ENCODE measurements at regions of chr3 and their contacts with region 1.

Region 1: DNA sequence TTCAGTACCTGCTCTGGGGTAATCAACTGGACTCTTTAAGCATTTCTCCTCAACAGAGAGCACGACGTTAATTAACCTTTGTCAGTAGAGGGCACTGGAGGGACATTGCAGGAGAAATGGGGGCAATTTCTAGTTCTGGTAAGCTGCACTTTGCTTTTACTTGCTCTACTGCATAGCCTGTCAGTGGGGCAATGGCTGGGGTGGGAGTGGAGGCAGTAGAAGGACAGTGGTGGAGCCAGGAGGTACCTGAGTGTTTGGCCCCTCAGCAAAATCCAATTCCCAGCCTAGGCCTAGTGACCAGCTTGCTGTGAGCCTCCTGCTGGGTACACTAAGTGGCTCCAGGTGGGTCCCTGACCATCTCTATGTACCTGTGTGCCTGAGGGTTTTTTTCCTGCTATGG is 18.3 kb upstream of the MED12L start:
- DNase-seq: peak; percentile 38
- ATAC-seq: no peak; the same call in 1 of the 2 replicates
- H3K4me3 ChIP-seq: no peak overlapping the region
- H3K27ac ChIP-seq: no peak overlapping the region
- H3K4me1 ChIP-seq: no peaks in the 10 kb centered on the region
- H3K27me3 ChIP-seq: peaks cover 9% of the 10 kb centered on the region; the same call in 1 of the 2 replicates
- CTCF ChIP-seq: peak; percentile 58

Region 2: DNA sequence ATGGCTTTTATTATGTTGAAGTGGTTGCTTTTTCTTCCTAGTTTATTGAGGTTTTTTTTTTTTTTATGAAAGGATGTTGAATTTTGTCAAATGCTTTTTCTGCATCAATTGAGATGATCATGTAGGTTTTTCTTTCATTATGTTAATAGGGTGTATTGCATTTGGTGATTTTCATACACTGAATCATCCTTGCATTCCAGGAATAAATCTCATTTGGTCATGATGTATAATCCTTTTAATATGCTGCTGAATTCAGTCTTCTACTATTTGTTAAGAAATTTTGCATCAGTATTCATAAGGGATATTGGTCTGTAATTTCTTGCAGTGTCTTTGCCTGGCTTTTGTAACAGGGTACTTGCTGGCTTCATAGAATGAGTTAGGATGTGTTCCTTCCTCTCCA is 83.1 kb before region 1 on chr3:
- CTCF ChIA-PET with region 1: no interaction called
- POLR2A ChIA-PET with region 1: no interaction called
- intact Hi-C with region 1: no loop called
- DNase-seq: no peak
- ATAC-seq: no peak
- H3K4me3 ChIP-seq: no peak overlapping the region
- H3K27ac ChIP-seq: no peak overlapping the region
- H3K4me1 ChIP-seq: no peaks in the 10 kb centered on the region
- H3K27me3 ChIP-seq: peaks cover 78% of the 10 kb centered on the region
- CTCF ChIP-seq: no peak

Region 3: GRCh38 chr3:151008699-151009098 is 58.5 kb before region 1 on chr3:
- CTCF ChIA-PET with region 1: no interaction called
- POLR2A ChIA-PET with region 1: interaction called, 12 read pairs
- intact Hi-C with region 1: no loop called
- DNase-seq: peak; percentile 22
- ATAC-seq: peak; percentile 53
- H3K4me3 ChIP-seq: no peak overlapping the region
- H3K27ac ChIP-seq: no peak overlapping the region
- H3K4me1 ChIP-seq: no peaks in the 10 kb centered on the region
- H3K27me3 ChIP-seq: peaks cover 45% of the 10 kb centered on the region
- CTCF ChIP-seq: peak; percentile 41; the same call in 1 of the 2 replicates